Activated CD8-positive, alpha-beta T cell treated with anti-CD3 and anti-CD28 coated beads for 36 hours (primary cell): ENCODE measurements at regions of chr14 and their contacts with region 1.

Region 1: DNA sequence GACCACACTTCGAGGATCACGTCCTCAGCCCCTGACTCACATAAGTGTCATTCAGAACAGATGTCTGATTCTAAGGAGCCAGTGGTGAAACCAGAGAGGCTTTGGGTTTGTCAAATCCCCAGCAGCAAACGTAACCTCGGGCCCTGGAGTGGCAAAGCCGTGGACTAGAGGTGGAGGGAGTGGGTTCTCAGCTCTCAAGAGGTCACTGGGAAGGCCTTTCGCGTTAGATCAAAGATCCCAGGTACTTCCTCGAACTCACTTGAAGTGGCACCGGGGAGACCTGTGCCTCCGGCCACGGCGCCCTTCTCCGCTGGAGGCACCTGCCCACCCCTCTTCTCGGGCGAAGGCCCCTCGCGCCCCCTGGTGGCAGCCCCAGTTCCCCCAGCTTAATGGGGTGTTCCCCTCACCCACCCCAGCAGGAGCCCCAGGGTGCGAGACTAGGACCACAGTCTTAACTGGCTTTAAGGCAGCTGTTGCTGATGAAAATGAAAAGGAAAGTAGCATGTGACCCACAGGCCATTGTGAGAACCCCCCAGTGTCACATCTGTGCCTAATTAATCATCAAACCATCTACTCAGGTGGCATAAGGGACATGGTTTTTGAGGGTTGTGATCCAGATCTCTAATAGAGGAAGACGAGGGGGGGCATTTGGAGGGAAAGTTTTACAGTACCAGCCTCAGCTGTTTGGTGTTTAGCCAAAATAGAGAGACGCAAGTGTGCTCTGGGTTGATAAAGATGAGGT is 672 bp upstream of the ESR2 start:
- DNase-seq: peak; percentile 91
- ATAC-seq: peak; percentile 87
- H3K4me3 Mint-ChIP-seq: peak overlapping the region; percentile 71
- H3K27ac Mint-ChIP-seq: peak overlapping the region; percentile 46
- H3K4me1 Mint-ChIP-seq: peaks cover 30% of the 10 kb centered on the region
- H3K27me3 Mint-ChIP-seq: peaks cover 21% of the 10 kb centered on the region
- CTCF ChIP-seq: peak; percentile 87

Region 2: DNA sequence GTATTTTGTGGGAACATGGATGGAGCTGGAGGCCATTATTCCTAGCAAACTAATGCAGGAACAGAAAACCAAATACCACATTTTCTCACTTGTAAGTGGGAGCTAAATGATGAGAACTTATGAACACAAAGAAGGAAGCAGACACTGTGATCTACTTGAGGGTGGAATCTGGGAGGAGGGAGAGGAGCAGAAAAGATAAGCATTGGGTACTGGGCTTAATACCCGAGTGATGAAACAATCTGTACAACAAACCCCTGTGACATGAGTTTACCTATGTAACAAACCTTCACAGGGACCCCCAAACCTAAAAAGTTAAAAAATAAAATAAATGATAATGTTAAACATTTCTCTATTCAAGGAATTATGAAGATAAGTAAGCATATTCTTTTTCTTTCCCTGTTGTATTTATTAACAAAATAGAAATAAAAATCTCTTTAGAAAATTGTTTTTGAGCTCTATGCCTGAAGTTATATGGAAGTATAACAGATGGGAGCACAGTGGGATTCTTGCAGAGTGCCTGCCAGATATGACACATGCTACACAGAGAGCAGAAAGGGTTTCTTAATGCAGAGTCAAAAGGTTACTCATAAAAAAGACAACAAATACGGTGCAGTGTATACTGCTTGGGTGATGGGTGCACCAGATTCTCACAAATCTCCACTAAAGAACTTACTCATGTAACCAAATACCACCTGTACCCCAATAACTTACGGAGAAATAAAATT is 494.0 kb before region 1 on chr14:
- CTCF ChIA-PET with region 1: interaction called, 21 read pairs
- POLR2A ChIA-PET with region 1: no interaction called
- intact Hi-C with region 1: loop called (anchors 2 kb)
- DNase-seq: no peak
- ATAC-seq: no peak
- H3K4me3 Mint-ChIP-seq: no peak overlapping the region
- H3K27ac Mint-ChIP-seq: no peak overlapping the region
- H3K4me1 Mint-ChIP-seq: peaks cover 4% of the 10 kb centered on the region
- H3K27me3 Mint-ChIP-seq: peaks cover 2% of the 10 kb centered on the region
- CTCF ChIP-seq: no peak

Region 3: GRCh38 chr14:63952933-63953437 is 341.9 kb before region 1 on chr14:
- CTCF ChIA-PET with region 1: no interaction called
- POLR2A ChIA-PET with region 1: no interaction called
- intact Hi-C with region 1: no loop called
- DNase-seq: no peak
- ATAC-seq: no peak
- H3K4me3 Mint-ChIP-seq: no peak overlapping the region
- H3K27ac Mint-ChIP-seq: no peak overlapping the region
- H3K4me1 Mint-ChIP-seq: no peaks in the 10 kb centered on the region
- H3K27me3 Mint-ChIP-seq: no peaks in the 10 kb centered on the region
- CTCF ChIP-seq: no peak

Region 4: DNA sequence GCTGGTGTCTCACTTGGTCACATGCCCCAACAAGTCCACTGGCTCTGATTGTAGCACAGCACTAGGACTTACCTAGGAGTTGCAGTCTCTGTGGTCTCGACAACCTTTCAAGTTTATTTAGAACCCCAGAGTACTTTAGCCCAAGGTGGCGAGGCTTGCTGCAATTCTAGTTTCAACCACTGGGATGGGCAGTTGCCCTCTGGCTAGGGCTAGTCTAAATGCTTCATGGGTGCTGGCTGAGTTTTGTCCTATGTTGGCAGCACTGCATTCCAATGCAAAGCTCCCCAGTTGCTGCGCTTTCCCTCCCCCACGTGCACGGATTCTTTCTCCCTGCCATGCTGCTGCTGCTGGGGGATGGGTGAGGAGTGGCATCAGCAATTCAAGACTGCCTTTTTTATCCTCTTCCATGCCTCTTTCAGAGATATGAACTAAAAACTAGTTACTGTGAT is 234.2 kb before region 1 on chr14:
- CTCF ChIA-PET with region 1: interaction called, 6 read pairs
- POLR2A ChIA-PET with region 1: no interaction called
- intact Hi-C with region 1: loop called (anchors 10 kb)
- DNase-seq: peak; percentile 31
- ATAC-seq: peak; percentile 47
- H3K4me3 Mint-ChIP-seq: no peak overlapping the region
- H3K27ac Mint-ChIP-seq: no peak overlapping the region
- H3K4me1 Mint-ChIP-seq: no peaks in the 10 kb centered on the region
- H3K27me3 Mint-ChIP-seq: no peaks in the 10 kb centered on the region
- CTCF ChIP-seq: peak; percentile 24

Region 5: GRCh38 chr14:64170181-64170580 is 124.7 kb before region 1 on chr14:
- CTCF ChIA-PET with region 1: interaction called, 4 read pairs
- POLR2A ChIA-PET with region 1: no interaction called
- intact Hi-C with region 1: loop called (anchors 10 kb)
- DNase-seq: no peak
- ATAC-seq: no peak
- H3K4me3 Mint-ChIP-seq: no peak overlapping the region
- H3K27ac Mint-ChIP-seq: no peak overlapping the region
- H3K4me1 Mint-ChIP-seq: peaks cover 9% of the 10 kb centered on the region
- H3K27me3 Mint-ChIP-seq: no peaks in the 10 kb centered on the region
- CTCF ChIP-seq: no peak

Region 6: DNA sequence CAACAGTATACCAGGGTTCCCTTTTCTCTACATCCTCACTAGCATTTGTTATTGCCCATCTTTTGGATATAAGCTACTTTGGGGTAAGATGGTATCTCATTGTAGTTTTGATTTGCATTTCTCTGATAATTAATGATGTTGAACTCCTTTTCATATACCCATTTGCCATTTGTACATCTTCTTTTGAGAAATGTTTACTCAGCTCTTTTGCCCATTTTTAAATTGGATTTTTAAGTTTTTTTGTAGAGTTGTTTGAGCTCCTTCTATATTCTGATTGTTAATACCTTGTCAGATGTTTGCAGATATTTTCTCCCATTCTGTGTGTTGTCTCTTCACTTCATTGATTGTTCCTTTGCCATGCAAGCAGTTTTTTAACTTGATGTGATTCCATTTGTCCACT is 22.8 kb before region 1 on chr14:
- CTCF ChIA-PET with region 1: interaction called, 11 read pairs
- POLR2A ChIA-PET with region 1: no interaction called
- intact Hi-C with region 1: no loop called
- DNase-seq: no peak
- ATAC-seq: no peak
- H3K4me3 Mint-ChIP-seq: no peak overlapping the region
- H3K27ac Mint-ChIP-seq: no peak overlapping the region
- H3K4me1 Mint-ChIP-seq: peaks cover 6% of the 10 kb centered on the region
- H3K27me3 Mint-ChIP-seq: no peaks in the 10 kb centered on the region
- CTCF ChIP-seq: no peak

Region 7: DNA sequence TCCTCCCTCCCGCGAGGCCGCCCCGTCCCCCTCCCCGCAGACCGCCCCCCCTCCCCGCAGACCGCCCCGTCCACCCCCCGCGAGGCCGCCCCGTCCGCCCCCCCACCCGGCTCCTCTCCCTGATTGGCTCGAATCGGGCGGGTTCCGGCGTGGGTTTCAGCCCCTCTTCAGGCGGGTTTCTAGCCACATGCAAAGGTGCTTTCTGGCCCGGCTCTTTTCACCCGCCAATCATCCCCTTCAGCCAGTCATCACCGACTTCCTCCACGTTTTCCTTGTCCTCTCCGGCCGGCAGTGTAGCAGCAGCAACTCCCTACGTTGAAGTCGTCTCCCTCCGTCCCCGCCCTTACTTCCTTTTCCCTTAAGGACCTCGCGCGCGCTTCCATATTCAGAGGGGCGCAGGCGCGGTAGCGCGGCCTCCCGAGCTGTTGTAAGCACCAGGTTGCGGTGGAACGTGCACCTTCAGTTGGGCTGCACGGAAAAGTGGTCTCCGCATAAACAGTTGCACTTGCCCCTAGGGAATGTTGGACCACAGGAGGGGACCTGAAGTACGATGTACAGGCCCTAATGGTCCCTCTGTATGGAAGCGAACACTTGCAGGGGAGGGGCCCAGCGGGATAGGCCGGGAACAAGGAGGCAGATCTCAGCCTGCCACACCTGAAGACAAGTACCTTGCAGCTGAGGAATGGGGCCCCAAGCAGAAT is 43.9 kb after region 1 on chr14:
- CTCF ChIA-PET with region 1: interaction called, 10 read pairs
- POLR2A ChIA-PET with region 1: no interaction called
- intact Hi-C with region 1: no loop called
- DNase-seq: peak; percentile 94
- ATAC-seq: peak; percentile 87
- H3K4me3 Mint-ChIP-seq: peak overlapping the region; percentile 96
- H3K27ac Mint-ChIP-seq: peak overlapping the region; percentile 96
- H3K4me1 Mint-ChIP-seq: peaks cover 19% of the 10 kb centered on the region
- H3K27me3 Mint-ChIP-seq: no peaks in the 10 kb centered on the region
- CTCF ChIP-seq: no peak

Region 8: DNA sequence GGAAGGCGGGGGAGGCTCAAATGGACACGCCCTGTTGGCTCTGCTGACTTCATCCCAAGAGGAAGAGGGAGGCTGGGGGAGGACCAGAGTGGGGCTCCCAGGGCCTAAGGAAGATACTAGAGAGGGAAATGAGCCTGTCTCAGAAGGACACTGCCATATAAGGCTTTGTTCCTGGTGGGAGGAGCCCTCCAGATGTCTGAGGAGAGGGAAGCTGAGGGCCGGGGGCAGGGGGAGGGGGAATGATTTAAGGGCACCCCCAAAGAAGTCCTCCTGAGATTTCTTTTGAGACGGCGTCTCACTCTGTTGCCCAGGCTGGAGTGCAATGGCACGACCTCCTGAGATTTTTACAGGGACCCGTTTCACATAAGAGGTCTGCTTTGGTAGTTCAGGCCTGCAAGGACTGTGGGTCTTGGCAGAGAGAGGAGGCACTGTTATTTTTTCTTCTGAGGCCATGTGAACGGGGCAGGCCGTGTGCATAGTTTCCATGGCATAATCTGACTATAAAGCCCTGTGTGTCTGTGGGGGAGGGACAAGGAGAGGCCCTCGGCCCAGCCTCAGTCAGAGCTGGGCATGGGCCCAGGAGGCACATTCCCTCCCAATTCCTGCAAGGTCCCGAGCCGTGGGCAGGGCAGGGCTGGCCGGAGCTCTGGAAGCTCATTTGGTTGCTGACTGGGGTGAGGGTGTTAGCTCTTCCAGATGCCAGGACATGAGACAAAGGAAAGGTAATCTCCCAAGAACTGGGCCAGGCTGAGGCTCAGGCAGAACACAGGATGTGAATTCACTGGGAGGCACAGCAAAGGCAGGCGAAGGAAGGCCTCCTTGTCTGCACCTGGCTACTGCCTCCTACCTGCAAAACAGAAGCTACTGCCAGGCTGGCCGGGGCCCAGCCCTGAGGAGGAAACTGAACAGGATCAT is 387.2 kb after region 1 on chr14:
- CTCF ChIA-PET with region 1: no interaction called
- POLR2A ChIA-PET with region 1: no interaction called
- intact Hi-C with region 1: no loop called
- DNase-seq: no peak
- ATAC-seq: no peak
- H3K4me3 Mint-ChIP-seq: no peak overlapping the region
- H3K27ac Mint-ChIP-seq: no peak overlapping the region
- H3K4me1 Mint-ChIP-seq: no peaks in the 10 kb centered on the region
- H3K27me3 Mint-ChIP-seq: no peaks in the 10 kb centered on the region
- CTCF ChIP-seq: no peak